ENCODE measurements at regions of chr4 and their contacts with region 1.

Region 1: DNA sequence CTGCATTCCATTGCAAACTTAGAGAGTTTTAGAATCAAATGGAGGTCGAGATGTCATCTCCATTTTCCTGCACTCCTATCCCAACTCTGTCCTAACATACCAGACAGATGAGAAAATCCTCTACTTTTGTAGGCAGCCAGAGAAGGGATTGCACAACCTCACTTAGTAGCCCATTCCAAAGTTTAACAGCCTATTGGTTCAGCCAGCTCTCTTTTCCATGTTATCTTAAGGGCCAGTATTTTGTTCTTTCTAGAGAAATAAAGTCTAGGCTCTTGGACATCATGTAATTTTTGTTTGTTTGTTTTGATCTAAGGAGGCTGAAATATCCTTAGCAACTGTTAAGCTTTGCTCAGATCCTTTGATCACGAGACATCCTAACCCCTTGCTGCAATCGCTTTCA is 173.0 kb downstream of the COX18 start:
- DNase-seq: peak in 2 of 4 donors; percentile 6 to 24
- ATAC-seq: peak; percentile 89
- H3K4me3 ChIP-seq: no peak overlapping the region
- H3K27ac ChIP-seq: peak overlapping the region in 1 of 2 donors; percentile 46
- H3K4me1 ChIP-seq: peaks cover 3 to 8% of the 10 kb centered on the region in 2 donors
- H3K27me3 ChIP-seq: no peaks in the 10 kb centered on the region
- CTCF ChIP-seq: no peak

Region 2: GRCh38 chr4:73006286-73006990 is 109.9 kb after region 1 on chr4:
- intact Hi-C with region 1: loop called in 1 of 2 experiments (anchors 10 kb)
- DNase-seq: no peak
- ATAC-seq: no peak
- H3K4me3 ChIP-seq: no peak overlapping the region
- H3K27ac ChIP-seq: no peak overlapping the region
- H3K4me1 ChIP-seq: no peaks in the 10 kb centered on the region
- H3K27me3 ChIP-seq: no peaks in the 10 kb centered on the region
- CTCF ChIP-seq: no peak